ENCODE measurements at regions of chr2 and their contacts with region 1.

Region 1: DNA sequence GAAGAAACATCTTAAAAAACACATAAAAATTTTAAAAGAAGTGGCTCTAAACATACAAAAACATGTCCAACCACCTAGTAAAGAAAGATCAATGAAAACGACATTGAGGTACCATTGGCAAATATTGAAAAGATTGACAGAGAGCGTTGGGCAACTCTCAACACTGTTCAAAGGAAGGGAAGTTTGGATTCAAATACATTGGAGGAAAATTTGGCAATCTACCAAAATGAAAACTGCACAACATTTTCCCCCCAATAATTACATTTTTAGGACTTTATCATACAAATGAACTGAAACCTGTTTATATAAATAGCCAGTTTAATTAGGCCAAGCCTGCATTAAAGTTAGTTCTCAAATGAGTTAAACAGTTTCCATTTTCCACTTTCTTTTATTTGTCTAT is 758.9 kb downstream of the NRXN1 start:
- DNase-seq: no peak
- H3K4me3 Mint-ChIP-seq: no peak overlapping the region
- H3K27ac Mint-ChIP-seq: no peak overlapping the region
- H3K4me1 Mint-ChIP-seq: no peaks in the 10 kb centered on the region
- H3K27me3 Mint-ChIP-seq: no peaks in the 10 kb centered on the region
- CTCF ChIP-seq: no peak

Region 2: DNA sequence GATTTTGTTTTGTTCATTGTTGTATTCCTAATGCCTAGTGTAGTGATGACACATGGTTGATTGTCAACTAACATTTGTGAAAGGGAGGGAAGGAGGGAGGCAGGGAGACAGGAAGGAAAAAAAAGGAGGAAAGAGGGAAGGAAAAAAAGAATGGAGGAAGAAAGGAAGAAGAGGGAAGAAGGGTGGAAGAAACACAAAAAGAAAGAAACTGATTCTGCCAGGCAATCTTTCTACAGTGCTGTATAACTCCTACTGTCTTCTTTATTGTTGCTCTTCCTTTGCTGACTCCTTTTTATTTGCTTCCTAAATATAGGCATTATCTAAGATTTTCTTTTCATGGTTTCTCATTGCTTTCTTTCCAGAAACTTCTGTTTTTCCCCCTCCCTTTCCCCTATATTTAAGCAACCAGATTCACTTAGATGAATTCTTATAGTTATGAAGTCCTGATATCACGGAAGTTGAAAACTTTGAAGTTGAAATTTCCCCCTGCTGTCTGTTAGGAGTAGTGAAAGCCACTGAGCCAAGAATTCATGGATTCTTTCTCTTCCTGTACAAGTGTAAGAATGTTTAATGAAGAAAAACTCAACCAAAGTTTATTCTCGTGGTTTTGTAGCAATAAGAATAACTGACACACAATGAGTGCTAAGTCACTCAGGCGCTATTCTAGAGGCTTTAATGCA is 813.5 kb before region 1 on chr2:
- CTCF ChIA-PET with region 1: no interaction called
- intact Hi-C with region 1: loop called (anchors 5 kb)
- DNase-seq: no peak
- H3K4me3 Mint-ChIP-seq: no peak overlapping the region
- H3K27ac Mint-ChIP-seq: no peak overlapping the region
- H3K4me1 Mint-ChIP-seq: no peaks in the 10 kb centered on the region
- H3K27me3 Mint-ChIP-seq: no peaks in the 10 kb centered on the region
- CTCF ChIP-seq: no peak

Measured in Calu3 (cell line).